ENCODE measurements at regions of chr13 and their contacts with region 1.

Region 1: GRCh38 chr13:101202590-101202989 is 213.7 kb downstream of the NALCN start:
- DNase-seq: no peak
- ATAC-seq: no peak
- H3K4me3 ChIP-seq: no peak overlapping the region
- H3K27ac ChIP-seq: no peak overlapping the region
- H3K4me1 ChIP-seq: no peaks in the 10 kb centered on the region
- H3K27me3 ChIP-seq: no peaks in the 10 kb centered on the region
- CTCF ChIP-seq: no peak
- POLR2A ChIP-seq: no peak

Region 2: GRCh38 chr13:102983496-102983895 is 1780.9 kb after region 1 on chr13:
- in situ Hi-C with region 1: no loop called
- intact Hi-C with region 1: loop called (anchors 10 kb)
- DNase-seq: no peak
- ATAC-seq: no peak
- H3K4me3 ChIP-seq: no peak overlapping the region
- H3K27ac ChIP-seq: no peak overlapping the region
- H3K4me1 ChIP-seq: no peaks in the 10 kb centered on the region
- H3K27me3 ChIP-seq: no peaks in the 10 kb centered on the region
- CTCF ChIP-seq: no peak
- POLR2A ChIP-seq: no peak